ENCODE measurements at regions of chr19 and their contacts with region 1.

Region 1: DNA sequence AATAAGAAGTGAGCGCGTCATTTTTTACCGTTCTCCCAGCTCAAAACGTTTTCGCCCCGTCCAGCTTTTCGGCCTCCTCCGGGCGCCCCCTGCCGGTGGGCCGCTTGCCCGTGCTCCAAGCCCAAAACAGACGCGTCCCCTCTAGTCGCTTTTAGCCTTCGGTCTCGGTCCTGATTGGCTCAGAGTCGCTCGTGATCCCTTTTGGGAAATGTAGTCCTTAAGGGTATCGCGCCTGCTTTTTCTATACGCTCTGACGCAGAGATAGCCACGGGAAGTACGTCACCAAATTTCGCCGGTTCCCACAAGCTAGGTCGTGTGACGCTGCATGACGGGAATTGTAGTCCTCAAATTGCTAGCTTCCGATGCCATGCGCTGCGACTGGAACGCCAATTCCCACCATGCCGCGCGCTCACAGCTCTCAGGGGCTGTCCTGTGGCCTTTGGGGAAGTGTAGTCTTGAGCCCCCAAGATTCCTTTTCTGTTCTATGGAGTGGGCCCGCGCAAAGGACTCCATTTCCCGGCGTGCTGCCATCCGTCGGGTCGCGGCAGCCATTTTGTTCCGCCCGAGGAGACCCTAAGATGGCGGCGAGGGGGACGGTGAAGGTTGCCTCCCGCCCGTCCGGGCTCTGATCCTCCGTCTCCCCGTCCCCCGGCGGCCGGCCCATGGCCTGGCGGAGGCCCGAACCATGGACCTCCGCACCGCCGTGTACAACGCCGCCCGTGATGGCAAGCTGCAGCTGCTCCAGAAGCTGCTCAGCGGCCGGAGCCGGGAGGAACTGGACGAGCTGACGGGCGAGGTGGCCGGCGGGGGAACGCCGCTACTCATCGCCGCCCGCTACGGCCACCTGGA is at the start of gene FEM1A:
- DNase-seq: peak; percentile 97 to 100 (median 100)
- H3K4me3 ChIP-seq: peak within 1 kb of the TSS in 1 of 2 donors; percentile 74
- H3K4me3 Mint-ChIP-seq: peak within 1 kb of the TSS; percentile 83 to 90 (median 84)
- H3K27ac ChIP-seq: peak within 1 kb of the TSS; percentile 89
- H3K27ac Mint-ChIP-seq: peak within 1 kb of the TSS; percentile 82 to 95 (median 92)
- H3K4me1 ChIP-seq: peaks cover 36% of the 10 kb centered on the region
- H3K4me1 Mint-ChIP-seq: peaks cover 8 to 40% (median 22%) of the 10 kb centered on the region in 4 donors
- H3K27me3 ChIP-seq: no peaks in the 10 kb centered on the region
- H3K27me3 Mint-ChIP-seq: no peaks in the 10 kb centered on the region
- total RNA-seq, gene FEM1A: 16.7 TPM

Region 2: DNA sequence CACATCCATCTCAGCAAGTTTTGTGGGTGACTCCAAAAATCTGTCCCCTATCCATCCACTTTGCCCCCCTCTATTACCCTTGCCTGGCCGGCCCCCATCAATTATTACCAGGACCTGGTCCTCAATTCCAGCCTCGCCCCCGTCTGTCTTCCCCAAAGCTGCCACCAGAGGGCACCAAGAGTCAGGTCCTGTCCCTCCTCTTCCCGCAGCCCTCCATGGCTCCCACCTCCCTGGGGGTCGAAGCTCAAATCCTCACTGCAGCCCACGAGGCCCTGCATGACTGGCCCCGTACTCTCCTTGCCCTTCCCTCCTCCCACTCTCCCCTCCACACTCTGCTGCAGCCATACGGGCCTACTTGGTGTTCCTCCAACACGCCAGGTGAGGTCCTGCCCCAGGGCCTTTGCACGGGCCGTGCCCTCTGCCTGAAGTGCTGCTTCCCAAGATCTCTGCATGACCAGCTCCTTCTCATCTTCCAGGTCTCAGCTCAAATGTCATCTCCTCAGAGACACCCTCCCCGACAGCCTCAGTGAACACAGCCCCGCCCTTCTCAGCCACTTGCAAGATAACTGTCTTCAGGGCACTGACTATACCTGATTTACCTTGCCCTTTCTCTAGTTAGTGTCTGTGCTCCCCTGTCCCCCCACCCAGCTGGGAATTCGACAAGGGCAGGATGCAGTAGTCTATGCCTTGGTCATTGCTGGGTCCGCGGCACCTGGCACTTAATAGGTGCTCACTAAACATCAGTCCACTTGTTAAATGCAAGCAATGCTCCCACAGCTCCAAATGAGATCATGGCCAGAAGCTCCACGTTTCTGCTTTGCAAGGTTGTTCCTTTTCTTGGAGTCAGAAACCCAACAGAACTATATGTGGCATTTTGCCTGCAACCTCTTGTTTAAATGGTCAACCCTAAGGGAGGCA is 215.1 kb before region 1 on chr19:
- CTCF ChIA-PET with region 1: interaction called, 4 read pairs
- POLR2A ChIA-PET with region 1: no interaction called
- intact Hi-C with region 1: loop called (anchors 5 kb)
- DNase-seq: peak; percentile 42 to 65 (median 52)
- H3K4me3 ChIP-seq: no peak overlapping the region
- H3K4me3 Mint-ChIP-seq: no peak overlapping the region
- H3K27ac ChIP-seq: no peak overlapping the region
- H3K27ac Mint-ChIP-seq: peak overlapping the region in 1 of 7 donors; percentile 66
- H3K4me1 ChIP-seq: no peaks in the 10 kb centered on the region
- H3K4me1 Mint-ChIP-seq: peaks cover 0 to 1% (median under 1%) of the 10 kb centered on the region in 4 donors
- H3K27me3 ChIP-seq: peaks cover 5% of the 10 kb centered on the region
- H3K27me3 Mint-ChIP-seq: peaks cover 20 to 32% of the 10 kb centered on the region in 2 donors

Region 3: DNA sequence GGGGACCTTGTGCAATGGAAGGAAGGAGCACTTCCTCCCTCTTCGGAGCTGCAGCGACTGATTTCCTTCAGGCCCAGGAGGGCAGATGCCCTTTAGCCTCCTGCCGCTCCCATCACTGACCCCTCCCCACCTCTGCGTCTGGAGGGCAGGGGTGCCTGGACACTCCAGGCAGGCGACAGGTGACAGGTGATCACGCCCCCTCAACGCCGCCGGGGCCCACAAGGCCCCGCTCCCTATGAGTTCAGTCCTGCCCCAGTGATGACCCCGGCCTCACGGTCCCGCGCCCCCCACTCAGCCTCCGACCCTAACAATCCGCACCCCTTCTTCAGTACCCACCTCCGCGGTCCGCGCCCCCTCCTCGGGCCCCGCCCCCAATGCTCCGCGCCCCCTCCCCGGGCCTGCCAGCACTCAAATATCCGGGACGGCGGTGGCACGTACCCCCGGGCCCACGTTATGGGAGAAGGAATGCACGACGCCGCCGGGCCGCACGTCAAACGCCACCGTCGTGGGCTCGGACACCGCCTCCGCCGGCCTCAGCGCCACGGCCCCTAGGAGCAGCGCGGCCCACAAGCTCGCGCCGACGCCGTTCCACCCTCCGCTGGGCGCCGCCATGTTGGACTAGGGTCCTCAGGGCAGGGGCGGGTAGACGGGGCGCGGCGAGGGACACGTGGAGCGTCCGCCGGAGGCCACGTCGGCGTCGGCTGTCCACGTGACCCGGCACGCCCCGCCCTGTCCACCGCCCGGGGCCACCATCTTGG is 121.5 kb before region 1 on chr19 and contains the start of gene MYDGF:
- CTCF ChIA-PET with region 1: interaction called, 3 read pairs
- POLR2A ChIA-PET with region 1: interaction called, 3 read pairs
- intact Hi-C with region 1: loop called (anchors 1 kb)
- DNase-seq: peak; percentile 90 to 94 (median 91)
- H3K4me3 ChIP-seq: peak within 1 kb of the TSS; percentile 49 to 79
- H3K4me3 Mint-ChIP-seq: peak within 1 kb of the TSS; percentile 87 to 91 (median 90)
- H3K27ac ChIP-seq: peak within 1 kb of the TSS; percentile 79
- H3K27ac Mint-ChIP-seq: peak within 1 kb of the TSS; percentile 76 to 93 (median 90)
- H3K4me1 ChIP-seq: peaks cover 16% of the 10 kb centered on the region
- H3K4me1 Mint-ChIP-seq: peaks cover 7 to 23% (median 13%) of the 10 kb centered on the region in 4 donors
- H3K27me3 ChIP-seq: no peaks in the 10 kb centered on the region
- H3K27me3 Mint-ChIP-seq: no peaks in the 10 kb centered on the region
- total RNA-seq, gene MYDGF: 43.0 to 46.4 TPM

Region 4: DNA sequence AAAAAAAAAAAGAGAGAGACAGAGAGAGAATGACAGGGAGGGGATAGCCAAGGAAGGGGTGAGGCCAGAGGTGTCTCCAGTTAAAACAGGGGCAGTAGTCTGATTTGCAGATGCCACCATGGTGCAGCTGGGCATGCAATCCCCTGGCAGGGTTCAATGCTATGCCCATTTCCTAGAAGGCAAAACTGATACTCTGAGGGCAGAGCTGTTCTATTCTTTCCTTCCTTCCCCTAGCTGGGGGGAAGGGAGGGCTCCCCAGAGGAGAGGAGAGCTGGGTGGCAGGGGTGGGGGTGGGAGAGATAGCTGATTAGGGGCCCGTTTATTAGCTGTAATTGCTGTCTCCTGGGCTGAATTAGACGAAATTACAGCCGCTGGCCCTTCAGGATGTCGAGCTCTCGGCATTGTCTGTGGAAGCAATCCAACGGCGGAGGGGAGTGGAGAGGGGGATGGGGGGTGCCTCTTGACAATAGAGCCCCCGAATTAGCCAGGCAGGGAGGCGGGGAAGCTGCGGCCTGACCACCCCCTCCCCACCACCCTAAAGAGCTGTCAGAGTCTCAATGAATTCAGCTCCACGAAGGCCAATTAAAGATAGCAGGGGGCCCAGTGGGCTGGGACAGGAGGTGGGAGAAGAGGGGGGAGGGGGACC is 53.3 kb before region 1 on chr19:
- CTCF ChIA-PET with region 1: interaction called, 162 read pairs
- POLR2A ChIA-PET with region 1: interaction called, 12 read pairs
- intact Hi-C with region 1: no loop called
- DNase-seq: no peak
- H3K4me3 ChIP-seq: no peak overlapping the region
- H3K4me3 Mint-ChIP-seq: no peak overlapping the region
- H3K27ac ChIP-seq: no peak overlapping the region
- H3K27ac Mint-ChIP-seq: no peak overlapping the region
- H3K4me1 ChIP-seq: no peaks in the 10 kb centered on the region
- H3K4me1 Mint-ChIP-seq: no peaks in the 10 kb centered on the region
- H3K27me3 ChIP-seq: no peaks in the 10 kb centered on the region
- H3K27me3 Mint-ChIP-seq: peaks cover 3 to 13% of the 10 kb centered on the region in 2 donors

Region 5: GRCh38 chr19:4803736-4804695 is 12.6 kb after region 1 on chr19:
- CTCF ChIA-PET with region 1: interaction called, 48 read pairs
- POLR2A ChIA-PET with region 1: interaction called, 6 read pairs
- intact Hi-C with region 1: no loop called
- DNase-seq: peak; percentile 46 to 60 (median 52)
- H3K4me3 ChIP-seq: no peak overlapping the region
- H3K4me3 Mint-ChIP-seq: peak overlapping the region in 1 of 8 donors; percentile 52
- H3K27ac ChIP-seq: no peak overlapping the region
- H3K27ac Mint-ChIP-seq: peak overlapping the region in 1 of 7 donors; percentile 75
- H3K4me1 ChIP-seq: no peaks in the 10 kb centered on the region
- H3K4me1 Mint-ChIP-seq: peaks cover 0 to 1% (median 0%) of the 10 kb centered on the region in 4 donors
- H3K27me3 ChIP-seq: no peaks in the 10 kb centered on the region
- H3K27me3 Mint-ChIP-seq: no peaks in the 10 kb centered on the region

Region 6: GRCh38 chr19:4844348-4845179 is 53.2 kb after region 1 on chr19:
- CTCF ChIA-PET with region 1: no interaction called
- POLR2A ChIA-PET with region 1: no interaction called
- intact Hi-C with region 1: no loop called
- DNase-seq: no peak
- H3K4me3 ChIP-seq: no peak overlapping the region
- H3K4me3 Mint-ChIP-seq: no peak overlapping the region
- H3K27ac ChIP-seq: no peak overlapping the region
- H3K27ac Mint-ChIP-seq: peak overlapping the region in 2 of 7 donors; percentile 42 to 53
- H3K4me1 ChIP-seq: peaks cover 12% of the 10 kb centered on the region
- H3K4me1 Mint-ChIP-seq: peaks cover 6 to 15% (median 11%) of the 10 kb centered on the region in 4 donors
- H3K27me3 ChIP-seq: no peaks in the 10 kb centered on the region
- H3K27me3 Mint-ChIP-seq: no peaks in the 10 kb centered on the region

Region 7: GRCh38 chr19:4968462-4969291 is 177.3 kb after region 1 on chr19 and contains the start of gene KDM4B:
- CTCF ChIA-PET with region 1: interaction called, 4 read pairs
- POLR2A ChIA-PET with region 1: interaction called, 18 read pairs
- intact Hi-C with region 1: loop called (anchors 1 kb)
- DNase-seq: peak; percentile 99 to 100 (median 100)
- H3K4me3 ChIP-seq: peak within 1 kb of the TSS; percentile 33 to 66
- H3K4me3 Mint-ChIP-seq: peak within 1 kb of the TSS; percentile 89 to 97 (median 92)
- H3K27ac ChIP-seq: peak within 1 kb of the TSS; percentile 42
- H3K27ac Mint-ChIP-seq: peak within 1 kb of the TSS; percentile 83 to 97 (median 94)
- H3K4me1 ChIP-seq: peaks cover 37% of the 10 kb centered on the region
- H3K4me1 Mint-ChIP-seq: peaks cover 24 to 40% (median 33%) of the 10 kb centered on the region in 4 donors
- H3K27me3 ChIP-seq: no peaks in the 10 kb centered on the region
- H3K27me3 Mint-ChIP-seq: no peaks in the 10 kb centered on the region
- total RNA-seq, gene KDM4B: 47.9 to 50.4 TPM